Activated naive CD4-positive, alpha-beta T cell treated with anti-CD3 and anti-CD28 coated beads for 36 hours (primary cell): ENCODE measurements at regions of chr5 and their contacts with region 1.

Region 1: DNA sequence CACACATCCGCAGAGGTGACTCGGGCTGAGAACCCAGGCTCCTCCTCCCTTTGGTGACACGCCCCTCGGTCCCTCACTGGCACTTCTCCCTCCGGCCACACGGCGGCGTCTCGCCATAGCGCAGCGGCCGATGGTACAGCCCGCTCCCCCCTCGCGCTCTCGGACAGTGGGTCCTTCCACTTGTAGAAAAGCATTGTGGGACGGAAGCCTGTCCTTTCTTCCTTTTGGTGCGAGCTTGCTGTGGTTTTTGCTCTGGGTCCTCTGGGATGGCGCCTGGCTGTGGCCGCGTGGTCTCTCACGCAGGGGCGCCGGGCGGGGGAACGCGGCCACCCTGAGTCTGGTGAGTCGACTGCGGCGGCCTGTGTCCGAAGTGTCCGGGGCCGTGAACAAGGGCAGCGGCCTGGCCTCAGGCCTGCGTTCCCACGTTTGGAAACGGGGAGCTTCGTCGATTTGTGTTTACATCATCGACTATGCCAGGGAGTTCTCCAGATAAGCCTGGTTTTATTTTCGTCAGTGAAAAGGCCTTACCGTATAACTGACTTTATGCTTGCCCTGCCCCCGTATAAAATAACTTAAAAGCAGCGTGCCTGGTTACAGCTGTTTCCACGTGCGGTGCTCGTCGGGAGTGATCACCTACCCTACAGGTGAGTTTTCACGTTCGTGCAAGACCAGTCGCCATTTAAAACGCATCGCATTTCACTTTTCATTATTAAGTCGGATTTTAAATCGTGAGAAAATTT is 258.3 kb downstream of the EPB41L4A start:
- DNase-seq: peak; percentile 94
- H3K4me3 Mint-ChIP-seq: peak overlapping the region; percentile 86
- H3K27ac Mint-ChIP-seq: peak overlapping the region; percentile 70
- H3K4me1 Mint-ChIP-seq: peaks cover 43% of the 10 kb centered on the region
- H3K27me3 Mint-ChIP-seq: no peaks in the 10 kb centered on the region

Region 2: GRCh38 chr5:110738812-110739651 is 1421.8 kb before region 1 on chr5 and contains the start of gene SLC25A46:
- CTCF ChIA-PET with region 1: no interaction called
- intact Hi-C with region 1: loop called (anchors 5 kb)
- DNase-seq: peak; percentile 89
- H3K4me3 Mint-ChIP-seq: peak within 1 kb of the TSS; percentile 96
- H3K27ac Mint-ChIP-seq: peak within 1 kb of the TSS; percentile 86
- H3K4me1 Mint-ChIP-seq: peaks cover 25% of the 10 kb centered on the region
- H3K27me3 Mint-ChIP-seq: peaks cover 8% of the 10 kb centered on the region
- total RNA-seq, gene SLC25A46: 26.1 to 27.2 TPM

Region 3: GRCh38 chr5:111530298-111530740 is 630.5 kb before region 1 on chr5:
- CTCF ChIA-PET with region 1: no interaction called
- intact Hi-C with region 1: loop called (anchors 1 kb)
- DNase-seq: peak; percentile 92
- H3K4me3 Mint-ChIP-seq: peak overlapping the region; percentile 62
- H3K27ac Mint-ChIP-seq: peak overlapping the region; percentile 83
- H3K4me1 Mint-ChIP-seq: peaks cover 16% of the 10 kb centered on the region
- H3K27me3 Mint-ChIP-seq: no peaks in the 10 kb centered on the region

Region 4: DNA sequence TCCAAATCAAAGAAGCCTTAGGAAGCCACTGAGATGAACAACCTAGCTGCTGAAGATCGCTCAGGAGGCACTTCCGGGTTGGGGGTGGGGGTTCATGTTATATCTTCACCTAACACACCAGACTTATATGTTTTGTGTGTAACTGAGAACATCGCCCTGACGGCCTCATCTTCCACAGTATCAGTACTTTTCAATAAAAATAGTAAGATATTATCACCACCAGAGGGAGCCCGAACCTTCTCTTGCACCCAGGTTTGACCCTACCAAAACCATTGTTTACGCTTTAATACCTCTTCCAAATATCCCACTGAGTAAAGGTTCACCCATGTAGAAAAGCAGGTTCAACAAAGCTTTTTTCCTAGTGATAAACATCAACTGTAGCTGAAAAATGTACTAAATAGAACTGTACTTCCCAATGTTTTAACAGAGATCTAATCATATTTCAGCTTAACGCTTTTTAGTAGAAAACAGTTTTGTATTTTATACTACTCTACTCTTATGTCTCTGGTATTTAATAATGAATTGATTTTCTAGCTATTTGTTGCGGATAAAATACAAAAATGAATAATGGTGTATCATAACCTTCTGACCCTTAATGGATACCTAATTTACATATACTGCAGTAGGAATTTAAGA is 14.3 kb after region 1 on chr5:
- CTCF ChIA-PET with region 1: interaction called, 25 read pairs
- intact Hi-C with region 1: no loop called
- DNase-seq: peak; percentile 40
- H3K4me3 Mint-ChIP-seq: no peak overlapping the region
- H3K27ac Mint-ChIP-seq: no peak overlapping the region
- H3K4me1 Mint-ChIP-seq: peaks cover 2% of the 10 kb centered on the region
- H3K27me3 Mint-ChIP-seq: no peaks in the 10 kb centered on the region

Region 5: DNA sequence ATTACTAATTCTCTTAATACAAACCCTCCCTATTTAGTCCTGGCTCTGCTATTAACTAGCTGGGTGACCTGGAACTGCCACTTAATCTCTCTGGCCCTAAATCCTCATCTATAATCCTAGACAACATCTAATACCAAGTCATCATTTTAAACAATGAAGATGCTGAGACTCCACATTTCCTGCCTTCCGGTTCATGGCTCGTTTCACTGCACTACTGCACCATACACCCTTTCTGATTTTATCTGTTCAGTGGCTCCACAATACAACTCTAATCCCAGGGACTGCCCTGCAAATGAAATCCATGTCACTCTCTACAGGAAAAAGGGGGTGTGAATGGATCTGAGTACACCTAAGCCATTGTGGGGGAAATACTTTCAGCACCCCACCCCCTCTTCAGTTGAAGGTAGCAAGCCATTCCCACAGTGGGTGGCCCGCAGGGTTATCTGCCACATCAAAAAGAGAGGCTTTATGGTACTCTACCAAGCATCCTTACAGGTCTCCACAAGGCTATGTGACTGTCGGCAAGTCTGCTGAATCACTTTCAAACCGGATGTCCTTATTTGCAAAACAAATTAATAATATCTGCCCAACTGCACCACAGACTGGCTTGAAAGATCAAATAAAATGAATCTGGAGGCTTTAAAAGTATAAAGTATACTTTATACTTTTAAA is 168.7 kb after region 1 on chr5:
- CTCF ChIA-PET with region 1: no interaction called
- intact Hi-C with region 1: no loop called
- DNase-seq: no peak
- H3K4me3 Mint-ChIP-seq: no peak overlapping the region
- H3K27ac Mint-ChIP-seq: no peak overlapping the region
- H3K4me1 Mint-ChIP-seq: peaks cover 1% of the 10 kb centered on the region
- H3K27me3 Mint-ChIP-seq: peaks cover 14% of the 10 kb centered on the region

Region 6: GRCh38 chr5:112860929-112861637 is 700.3 kb after region 1 on chr5 and contains the start of gene SRP19:
- CTCF ChIA-PET with region 1: no interaction called
- intact Hi-C with region 1: loop called (anchors 2 kb)
- DNase-seq: peak; percentile 96
- H3K4me3 Mint-ChIP-seq: peak within 1 kb of the TSS; percentile 96
- H3K27ac Mint-ChIP-seq: peak within 1 kb of the TSS; percentile 95
- H3K4me1 Mint-ChIP-seq: peaks cover 30% of the 10 kb centered on the region
- H3K27me3 Mint-ChIP-seq: peaks cover 9% of the 10 kb centered on the region
- total RNA-seq, gene SRP19: 43.7 to 49.6 TPM

Region 7: DNA sequence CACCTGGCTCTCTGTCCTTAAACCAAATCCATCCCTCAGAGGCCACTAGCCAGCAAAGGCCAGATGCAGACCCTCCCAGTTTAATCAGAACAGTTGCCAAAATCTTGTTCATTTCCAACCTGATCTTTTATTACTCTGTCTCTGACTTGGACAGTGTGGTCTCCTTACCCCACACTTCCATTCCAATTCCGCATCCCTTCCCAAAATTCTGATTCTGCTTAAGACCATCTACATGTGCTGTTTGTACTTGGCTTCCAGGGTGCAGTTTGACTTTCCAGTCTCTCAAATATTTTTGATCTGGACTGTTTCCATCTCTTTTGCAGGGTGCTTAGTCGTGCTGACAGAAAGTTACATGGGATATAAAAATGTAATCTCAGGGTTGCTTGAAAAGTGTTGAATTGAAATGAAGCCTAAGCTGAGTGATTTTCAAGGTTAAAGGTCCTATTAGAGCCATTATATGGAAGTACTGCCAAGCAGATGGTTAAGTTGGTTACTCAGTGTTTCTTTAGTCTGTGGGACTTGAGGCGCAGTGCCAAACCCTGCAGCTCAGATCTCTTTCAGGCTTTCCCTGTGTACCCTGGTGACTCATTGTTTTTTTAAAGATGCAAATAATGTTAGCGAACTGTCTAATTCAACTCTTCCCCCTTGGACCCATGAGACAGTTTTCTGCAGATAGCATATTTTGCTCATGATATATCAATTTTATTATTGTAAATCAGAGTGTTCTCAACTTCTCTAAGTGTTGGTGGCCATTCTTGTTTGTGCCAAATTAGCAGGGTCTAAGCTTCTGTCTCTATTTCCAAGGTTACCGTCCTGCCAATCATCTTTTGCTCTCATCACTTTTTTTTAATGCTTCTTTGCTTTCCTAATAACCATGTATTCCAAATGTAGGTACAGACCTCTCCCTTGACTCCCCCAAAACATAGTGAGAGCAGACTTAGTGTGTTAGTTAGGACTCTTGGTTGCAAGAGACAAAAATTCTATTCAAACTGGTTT is 797.6 kb after region 1 on chr5:
- CTCF ChIA-PET with region 1: no interaction called
- intact Hi-C with region 1: loop called (anchors 5 kb)
- DNase-seq: peak; percentile 47
- H3K4me3 Mint-ChIP-seq: no peak overlapping the region
- H3K27ac Mint-ChIP-seq: no peak overlapping the region
- H3K4me1 Mint-ChIP-seq: peaks cover 20% of the 10 kb centered on the region
- H3K27me3 Mint-ChIP-seq: no peaks in the 10 kb centered on the region